Activated naive CD4-positive, alpha-beta T cell treated with anti-CD3 and anti-CD28 coated beads, Interleukin-2, amount 10 ng/mL, durations not matched to agents 7 days and 5 days (primary cell): ENCODE measurements at regions of chr7 and their contacts with region 1.

Region 1: DNA sequence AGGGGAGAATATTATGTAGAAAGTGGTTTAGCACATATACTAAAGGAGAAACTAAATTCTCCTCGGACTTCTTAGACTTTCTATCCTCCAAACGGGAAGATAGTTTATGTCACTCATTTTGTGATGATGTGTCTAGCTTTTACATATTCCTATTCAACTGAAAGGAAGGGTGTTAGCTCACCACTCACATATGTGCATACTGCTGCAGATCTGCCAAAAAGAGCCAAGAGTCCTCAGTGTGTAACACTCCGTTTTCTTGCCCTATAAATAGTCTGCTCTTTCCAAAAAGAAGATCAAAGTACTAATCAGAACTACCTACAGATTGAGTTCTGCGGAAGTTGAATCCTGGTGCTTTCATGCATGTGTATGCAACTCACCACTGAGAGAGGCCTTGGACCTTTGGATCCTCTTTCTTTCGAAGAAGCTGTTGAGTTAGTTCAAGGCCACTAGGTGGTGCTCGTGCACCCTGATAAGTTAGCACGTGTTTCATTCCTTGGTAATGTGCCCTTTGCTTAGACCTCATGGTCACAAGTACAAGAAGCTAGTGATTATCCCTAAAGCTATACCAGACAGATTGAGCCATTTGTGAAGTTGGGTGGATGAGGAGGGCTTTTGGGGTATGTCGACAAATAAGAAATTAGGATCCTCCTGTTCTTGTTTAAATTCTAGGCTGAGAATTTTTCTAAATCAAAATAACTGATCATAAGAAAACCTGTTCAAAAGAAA is 14.1 kb downstream of the YAE1 start:
- DNase-seq: peak; percentile 84
- H3K4me3 Mint-ChIP-seq: no peak overlapping the region
- H3K27ac Mint-ChIP-seq: peak overlapping the region; percentile 0
- H3K4me1 Mint-ChIP-seq: peaks cover 9% of the 10 kb centered on the region
- H3K27me3 Mint-ChIP-seq: no peaks in the 10 kb centered on the region

Region 2: GRCh38 chr7:39554583-39555165 is 25.6 kb before region 1 on chr7:
- CTCF ChIA-PET with region 1: no interaction called
- DNase-seq: no peak
- H3K4me3 Mint-ChIP-seq: no peak overlapping the region
- H3K27ac Mint-ChIP-seq: no peak overlapping the region
- H3K4me1 Mint-ChIP-seq: no peaks in the 10 kb centered on the region
- H3K27me3 Mint-ChIP-seq: peaks cover 28% of the 10 kb centered on the region

Region 3: GRCh38 chr7:39623018-39623731 is 42.9 kb after region 1 on chr7 and contains the start of gene RALA:
- CTCF ChIA-PET with region 1: interaction called, 47 read pairs
- DNase-seq: peak; percentile 94
- H3K4me3 Mint-ChIP-seq: peak within 1 kb of the TSS; percentile 98
- H3K27ac Mint-ChIP-seq: peak within 1 kb of the TSS; percentile 94
- H3K4me1 Mint-ChIP-seq: peaks cover 53% of the 10 kb centered on the region
- H3K27me3 Mint-ChIP-seq: no peaks in the 10 kb centered on the region

Region 4: GRCh38 chr7:39732837-39733804 is 152.8 kb after region 1 on chr7:
- CTCF ChIA-PET with region 1: interaction called, 420 read pairs
- DNase-seq: peak; percentile 95
- H3K4me3 Mint-ChIP-seq: peak overlapping the region; percentile 79
- H3K27ac Mint-ChIP-seq: peak overlapping the region; percentile 90
- H3K4me1 Mint-ChIP-seq: peaks cover 52% of the 10 kb centered on the region
- H3K27me3 Mint-ChIP-seq: peaks cover 14% of the 10 kb centered on the region

Region 5: GRCh38 chr7:39746103-39746819 is 165.9 kb after region 1 on chr7:
- CTCF ChIA-PET with region 1: interaction called, 420 read pairs
- DNase-seq: peak; percentile 73
- H3K4me3 Mint-ChIP-seq: no peak overlapping the region
- H3K27ac Mint-ChIP-seq: no peak overlapping the region
- H3K4me1 Mint-ChIP-seq: peaks cover 6% of the 10 kb centered on the region
- H3K27me3 Mint-ChIP-seq: no peaks in the 10 kb centered on the region

Region 6: DNA sequence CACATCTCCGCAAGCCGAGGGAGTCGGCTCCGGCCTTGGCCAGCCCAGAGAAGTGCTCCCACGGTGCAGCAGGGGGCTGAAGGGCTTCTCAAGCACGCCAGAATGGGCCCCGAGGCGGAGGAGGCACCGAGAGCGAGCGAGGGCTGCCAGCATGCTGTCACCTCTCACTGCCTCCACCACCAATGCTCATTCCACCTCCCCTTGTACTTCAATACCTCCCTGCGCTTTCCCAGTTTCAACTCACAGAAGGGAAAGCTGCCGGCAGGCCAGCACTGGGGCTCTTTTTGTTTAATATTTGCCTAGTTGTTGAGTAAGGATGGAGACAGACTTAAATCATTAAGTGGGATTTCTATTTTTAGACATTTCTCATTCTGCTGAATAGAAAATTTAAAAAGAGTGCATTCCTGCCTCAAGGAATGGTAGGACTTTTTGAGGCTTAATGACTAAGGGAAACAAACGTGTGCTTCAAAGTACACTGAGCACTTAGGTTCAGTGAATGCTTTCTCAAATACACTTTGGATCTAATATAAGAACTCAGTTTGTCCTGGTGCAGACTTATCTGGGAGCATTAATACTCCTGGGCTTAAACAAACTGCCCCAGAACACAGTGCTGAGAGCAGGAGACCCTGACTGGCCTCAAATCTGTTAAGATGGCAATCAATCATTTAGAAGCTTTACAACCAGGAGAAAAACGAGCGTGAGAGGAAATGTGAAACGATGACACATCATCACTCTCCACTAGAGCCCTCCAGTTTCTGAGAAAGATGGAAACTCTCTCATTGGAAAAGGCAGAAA is 174.2 kb after region 1 on chr7:
- CTCF ChIA-PET with region 1: interaction called, 420 read pairs
- DNase-seq: no peak
- H3K4me3 Mint-ChIP-seq: no peak overlapping the region
- H3K27ac Mint-ChIP-seq: no peak overlapping the region
- H3K4me1 Mint-ChIP-seq: peaks cover 10% of the 10 kb centered on the region
- H3K27me3 Mint-ChIP-seq: no peaks in the 10 kb centered on the region

Region 7: GRCh38 chr7:39894904-39895303 is 314.6 kb after region 1 on chr7:
- CTCF ChIA-PET with region 1: interaction called, 24 read pairs
- DNase-seq: no peak
- H3K4me3 Mint-ChIP-seq: no peak overlapping the region
- H3K27ac Mint-ChIP-seq: no peak overlapping the region
- H3K4me1 Mint-ChIP-seq: no peaks in the 10 kb centered on the region
- H3K27me3 Mint-ChIP-seq: peaks cover 44% of the 10 kb centered on the region

Region 8: DNA sequence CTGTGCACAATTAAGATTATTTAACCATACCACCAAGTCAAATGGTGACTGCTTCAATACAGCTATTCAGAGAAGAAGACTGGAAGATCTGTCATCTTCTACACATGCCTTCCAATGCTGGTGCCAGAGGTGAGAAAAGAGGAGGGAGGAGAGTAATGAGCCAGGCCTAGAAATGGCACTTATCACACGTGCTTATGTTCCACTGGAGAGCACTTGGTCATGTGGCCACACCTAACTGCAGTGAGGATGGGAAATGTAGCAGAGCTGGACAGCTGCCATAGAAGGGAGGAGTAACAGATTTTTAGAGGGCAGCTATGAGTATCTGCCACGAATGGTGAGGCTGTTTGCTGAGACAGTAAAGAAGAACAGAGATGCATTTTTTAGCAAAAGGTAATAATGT is 477.0 kb after region 1 on chr7:
- CTCF ChIA-PET with region 1: interaction called, 15 read pairs
- DNase-seq: no peak
- H3K4me3 Mint-ChIP-seq: no peak overlapping the region
- H3K27ac Mint-ChIP-seq: no peak overlapping the region
- H3K4me1 Mint-ChIP-seq: peaks cover 3% of the 10 kb centered on the region
- H3K27me3 Mint-ChIP-seq: no peaks in the 10 kb centered on the region